ENCODE measurements at regions of chr19 and their contacts with region 1.

Region 1: DNA sequence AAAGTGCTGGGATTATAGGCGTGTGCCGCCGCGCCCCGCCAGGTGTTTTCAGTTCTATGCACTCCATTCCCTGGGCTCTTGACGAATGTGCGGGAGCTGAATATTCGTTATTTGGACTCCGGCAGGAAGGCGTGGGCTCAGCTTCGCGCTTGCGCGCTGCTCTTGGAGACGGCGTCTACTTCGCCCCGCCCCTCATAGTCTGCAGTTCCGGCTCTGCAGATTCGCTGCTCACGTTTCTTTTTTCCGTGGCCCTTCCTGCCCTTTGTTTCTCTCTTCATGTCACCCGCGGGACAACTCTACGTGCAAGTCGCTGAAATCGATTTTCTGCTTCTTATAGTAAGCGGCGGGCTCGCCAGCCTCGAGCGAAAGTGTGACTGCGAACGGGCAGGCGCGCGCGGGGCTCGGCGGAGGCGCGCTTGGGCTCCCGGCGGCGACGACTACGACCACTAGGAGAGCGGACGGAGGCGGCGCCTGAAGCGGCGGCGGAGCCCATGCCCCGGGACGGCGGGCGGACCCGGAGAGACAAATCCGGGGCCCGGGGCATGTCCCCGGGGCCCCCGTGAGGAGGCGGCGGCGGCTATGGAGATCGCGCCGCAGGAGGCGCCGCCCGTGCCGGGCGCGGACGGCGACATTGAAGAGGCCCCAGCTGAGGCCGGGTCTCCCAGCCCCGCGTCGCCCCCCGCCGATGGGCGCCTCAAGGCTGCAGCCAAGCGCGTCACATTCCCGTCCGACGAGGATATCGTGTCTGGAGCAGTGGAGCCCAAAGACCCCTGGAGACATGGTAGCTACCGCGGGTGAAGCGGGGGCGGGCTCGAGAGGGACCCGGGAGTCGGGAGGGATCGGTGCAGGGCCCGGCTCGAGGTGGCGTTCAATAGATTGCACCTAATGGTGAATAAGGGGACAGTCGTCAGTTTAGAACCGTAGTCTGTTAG is at the start of gene PPP1R37:
- DNase-seq: peak; percentile 91 to 93
- ATAC-seq: peak; percentile 88 to 92
- H3K4me3 ChIP-seq: peak within 1 kb of the TSS; percentile 71 to 98 (median 84)
- H3K27ac ChIP-seq: peak within 1 kb of the TSS; percentile 90 to 96 (median 90)
- H3K4me1 ChIP-seq: peaks cover 53 to 55% of the 10 kb centered on the region in 2 donors
- H3K27me3 ChIP-seq: no peaks in the 10 kb centered on the region
- CTCF ChIP-seq: peak; percentile 46 to 70 (median 59)
- POLR2A ChIP-seq: peak; percentile 65 to 71
- total RNA-seq, gene PPP1R37: 30.5 to 51.1 (median 39.7) TPM

Region 2: DNA sequence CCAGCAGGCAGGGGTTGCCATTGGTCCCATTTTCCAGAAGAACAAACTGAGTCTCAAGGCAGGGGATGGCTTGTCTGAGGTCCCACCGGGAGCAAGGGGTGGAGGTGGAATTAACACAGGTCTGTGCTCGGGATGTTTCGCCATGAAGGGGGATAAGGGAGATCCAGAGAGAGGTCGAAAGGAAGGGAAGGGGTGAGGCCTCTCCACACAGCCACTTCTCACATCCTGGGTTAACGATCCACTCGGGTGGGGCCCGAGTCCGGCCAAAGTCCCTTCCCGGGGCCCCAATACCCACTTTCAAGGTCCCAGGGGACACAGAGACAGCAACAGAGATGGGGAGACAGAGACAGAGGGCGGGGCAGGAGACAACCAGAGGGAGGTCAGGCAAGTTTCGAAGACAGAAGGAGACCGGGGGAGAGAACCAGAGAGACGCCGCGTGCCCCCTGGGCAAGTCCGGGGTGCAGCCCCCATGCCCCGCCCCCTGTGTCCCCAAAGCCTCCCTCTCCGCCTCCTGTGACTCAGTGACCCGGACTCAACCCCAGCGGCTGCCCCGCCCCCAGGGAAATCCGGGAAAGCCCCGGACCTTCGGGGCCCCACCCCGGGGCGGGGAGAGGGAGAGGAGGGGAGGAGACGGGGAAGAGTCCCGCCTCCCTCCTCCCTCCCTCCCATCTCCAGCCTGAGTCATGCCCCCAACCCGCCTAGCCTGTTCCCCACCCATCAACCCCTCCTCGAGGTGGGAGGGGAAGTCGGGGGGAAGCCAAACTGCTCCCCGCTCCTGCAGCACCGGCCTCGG is 345.9 kb before region 1 on chr19:
- in situ Hi-C with region 1: no loop called
- intact Hi-C with region 1: loop called (anchors 5 kb)
- DNase-seq: peak; percentile 92 to 97
- ATAC-seq: peak; percentile 86 to 88
- H3K4me3 ChIP-seq: peak overlapping the region; percentile 61 to 87 (median 72)
- H3K27ac ChIP-seq: peak overlapping the region; percentile 91 to 97 (median 95)
- H3K4me1 ChIP-seq: peaks cover 45 to 67% of the 10 kb centered on the region in 2 donors
- H3K27me3 ChIP-seq: no peaks in the 10 kb centered on the region
- CTCF ChIP-seq: no peak
- POLR2A ChIP-seq: peak; percentile 80

Region 3: GRCh38 chr19:45008552-45008951 is 84.5 kb before region 1 on chr19:
- in situ Hi-C with region 1: no loop called
- intact Hi-C with region 1: no loop called
- DNase-seq: no peak
- ATAC-seq: no peak
- H3K4me3 ChIP-seq: no peak overlapping the region
- H3K27ac ChIP-seq: no peak overlapping the region
- H3K4me1 ChIP-seq: no peaks in the 10 kb centered on the region
- H3K27me3 ChIP-seq: no peaks in the 10 kb centered on the region
- CTCF ChIP-seq: no peak
- POLR2A ChIP-seq: no peak

Region 4: DNA sequence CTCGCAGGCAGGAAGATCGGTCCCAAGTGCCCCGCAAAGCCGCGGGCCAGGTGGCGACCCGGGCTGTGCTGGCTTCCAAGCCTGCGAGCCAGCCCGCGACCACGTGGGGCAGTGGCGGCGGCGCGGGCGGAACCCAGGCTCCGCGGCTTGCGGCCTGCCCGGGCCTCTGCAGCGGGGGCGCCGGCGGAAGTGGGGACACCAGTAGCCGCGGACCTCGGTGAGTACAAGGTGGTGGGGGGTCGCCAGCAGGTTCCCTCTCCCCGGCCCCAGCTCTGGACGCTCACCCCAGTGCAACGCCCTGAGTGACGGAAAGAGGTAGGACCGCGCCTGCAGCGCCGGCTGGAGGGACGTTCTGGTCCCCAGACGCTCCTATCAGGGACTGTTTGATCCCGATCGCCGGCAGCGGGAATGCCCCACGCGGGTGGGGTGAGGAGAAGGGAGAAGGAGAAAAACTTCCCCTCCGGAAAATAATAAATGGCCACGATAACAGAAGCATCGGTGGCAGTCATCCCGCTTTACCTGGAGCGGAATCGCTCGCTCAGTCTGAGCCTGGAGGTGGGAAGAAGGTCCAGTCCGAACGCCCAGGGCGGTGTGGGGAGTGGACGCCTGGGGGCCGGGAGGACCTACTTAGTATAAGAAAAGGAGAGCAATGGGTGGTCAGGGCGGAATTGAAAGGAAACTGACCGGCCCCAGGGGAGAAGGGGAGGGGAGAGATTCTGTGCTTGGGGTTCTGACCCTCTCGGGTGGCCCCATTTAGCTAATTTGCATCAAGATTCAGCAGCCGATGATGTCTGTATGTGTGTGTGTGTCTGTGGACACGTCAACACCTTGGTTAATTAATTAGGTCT is 13.7 kb before region 1 on chr19 and contains the start of gene GEMIN7:
- in situ Hi-C with region 1: no loop called
- intact Hi-C with region 1: loop called (anchors 2 kb)
- DNase-seq: peak; percentile 51 to 71
- ATAC-seq: peak; percentile 79 to 81
- H3K4me3 ChIP-seq: peak within 1 kb of the TSS; percentile 77 to 95 (median 86)
- H3K27ac ChIP-seq: peak within 1 kb of the TSS; percentile 84 to 95 (median 90)
- H3K4me1 ChIP-seq: peaks cover 21 to 22% of the 10 kb centered on the region in 2 donors
- H3K27me3 ChIP-seq: no peaks in the 10 kb centered on the region
- CTCF ChIP-seq: peak in 2 of 5 experiments; percentile 15 to 20
- POLR2A ChIP-seq: peak in 1 of 2 donors; percentile 61
- total RNA-seq, gene GEMIN7: 18.6 to 33.4 (median 27.9) TPM

Region 5: DNA sequence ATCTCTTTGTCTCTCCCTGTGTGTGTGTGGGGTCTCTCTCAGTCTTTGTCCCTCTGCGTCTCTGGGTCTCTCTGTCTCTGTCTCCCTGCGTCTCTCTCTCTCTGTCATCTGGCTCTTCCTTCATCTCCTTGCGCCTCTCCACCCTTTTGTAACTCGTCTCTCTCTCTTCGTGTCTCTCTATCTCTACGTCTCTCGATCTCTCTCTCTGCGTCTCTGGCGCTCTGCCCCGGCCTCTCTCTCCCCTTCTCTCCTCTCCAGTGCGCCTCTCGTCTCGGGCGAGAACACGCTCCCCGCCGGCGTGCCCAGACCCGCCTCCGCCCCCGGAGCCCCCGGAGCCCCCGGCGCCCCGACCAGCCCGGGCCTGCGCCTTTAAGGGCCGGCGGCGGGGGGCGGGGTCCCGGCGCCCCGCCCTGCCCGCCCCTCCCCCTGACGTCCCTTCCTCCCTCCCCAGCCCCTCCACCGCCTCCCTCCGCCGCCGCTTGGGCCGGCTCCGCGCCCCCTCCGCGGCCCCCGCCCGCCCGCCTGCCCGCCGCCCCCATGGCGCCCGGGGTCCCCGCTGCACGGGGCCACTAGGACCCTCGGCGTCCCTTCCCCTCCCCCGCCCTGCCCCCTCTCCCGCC is 157.9 kb after region 1 on chr19 and contains the start of gene MARK4:
- in situ Hi-C with region 1: no loop called
- intact Hi-C with region 1: loop called (anchors 5 kb)
- DNase-seq: peak; percentile 11 to 38
- ATAC-seq: peak; percentile 73 to 78
- H3K4me3 ChIP-seq: peak within 1 kb of the TSS; percentile 80 to 91 (median 86)
- H3K27ac ChIP-seq: peak within 1 kb of the TSS; percentile 76 to 89 (median 80)
- H3K4me1 ChIP-seq: peaks cover 23 to 26% of the 10 kb centered on the region in 2 donors
- H3K27me3 ChIP-seq: no peaks in the 10 kb centered on the region
- CTCF ChIP-seq: peak in 1 of 5 experiments; percentile 7
- POLR2A ChIP-seq: peak; percentile 31 to 48
- total RNA-seq, gene MARK4: 12.2 to 42.5 (median 22.1) TPM